ENCODE measurements at regions of chr7 and their contacts with region 1.

Region 1: DNA sequence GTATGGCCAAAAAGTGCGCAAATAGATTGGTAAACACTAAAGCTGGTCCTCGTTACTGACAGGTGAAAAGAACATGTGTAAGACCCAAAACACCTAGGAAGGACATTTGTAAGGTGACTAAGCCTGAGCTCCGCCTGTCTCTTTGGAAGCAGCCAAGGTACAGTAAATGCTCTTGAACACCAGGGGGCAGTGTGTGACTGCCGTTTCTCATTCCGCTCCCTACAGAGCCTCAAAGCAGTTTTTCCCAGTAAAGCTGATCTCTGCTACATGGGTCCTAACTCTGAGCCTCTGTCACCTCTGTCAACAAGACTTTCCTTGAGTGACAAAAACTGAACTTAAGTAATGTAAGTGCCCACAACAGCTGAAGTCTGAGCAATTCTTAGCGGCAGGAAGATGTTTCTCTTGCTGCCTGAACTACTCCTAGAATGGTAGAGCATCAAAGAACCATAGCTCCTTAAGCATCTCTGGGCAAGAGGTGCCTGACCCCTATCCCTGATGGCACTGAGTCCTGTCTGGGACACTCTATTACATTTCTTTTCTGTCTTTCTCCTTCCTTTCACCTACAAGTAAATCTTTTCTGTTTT is 238.0 kb upstream of the INHBA start:
- DNase-seq: peak; percentile 66
- H3K4me3 Mint-ChIP-seq: no peak overlapping the region
- H3K27ac Mint-ChIP-seq: no peak overlapping the region
- H3K4me1 Mint-ChIP-seq: peaks cover 5% of the 10 kb centered on the region
- H3K27me3 Mint-ChIP-seq: peaks cover 25% of the 10 kb centered on the region

Region 2: DNA sequence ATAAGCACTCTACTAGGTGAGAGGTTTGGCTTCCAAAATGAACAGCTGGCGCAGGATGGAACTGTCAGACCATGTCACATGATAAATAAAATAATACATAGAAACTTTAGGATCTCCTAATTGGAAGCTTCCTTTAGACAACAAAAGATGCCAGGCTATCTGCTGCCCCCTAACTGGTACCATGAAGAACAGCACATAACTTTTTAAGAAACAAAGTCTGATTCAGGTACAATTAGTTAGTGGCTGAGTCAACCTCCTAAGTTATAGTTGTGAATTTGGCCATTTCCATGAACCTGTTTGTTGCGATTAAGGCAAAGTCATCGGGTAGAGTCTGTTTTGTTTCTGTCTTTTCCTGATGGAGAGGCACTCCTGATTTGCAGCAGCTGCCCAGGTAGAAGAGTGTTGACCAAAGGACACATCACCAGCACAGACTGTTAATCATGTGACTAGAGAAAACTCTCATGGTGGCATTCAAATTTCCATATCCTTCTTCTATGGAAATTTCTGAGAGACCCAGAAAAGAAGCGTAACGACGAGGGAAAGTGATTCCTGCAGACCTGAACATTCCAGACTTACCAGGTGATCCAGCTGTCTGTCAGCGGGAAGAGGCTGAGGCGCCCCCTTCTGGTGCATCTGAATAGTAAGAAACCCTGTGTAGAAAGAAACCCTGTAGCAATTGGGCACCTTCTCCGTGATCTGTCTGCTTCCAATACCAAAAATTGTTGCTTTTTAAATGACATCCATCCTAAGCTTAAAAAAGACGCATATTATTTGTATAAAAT is 229.4 kb before region 1 on chr7:
- CTCF ChIA-PET with region 1: no interaction called
- POLR2A ChIA-PET with region 1: no interaction called
- intact Hi-C with region 1: no loop called
- DNase-seq: no peak
- H3K4me3 Mint-ChIP-seq: no peak overlapping the region
- H3K27ac Mint-ChIP-seq: no peak overlapping the region
- H3K4me1 Mint-ChIP-seq: no peaks in the 10 kb centered on the region
- H3K27me3 Mint-ChIP-seq: peaks cover 6% of the 10 kb centered on the region

Region 3: GRCh38 chr7:41792120-41792519 is 148.7 kb before region 1 on chr7:
- CTCF ChIA-PET with region 1: no interaction called
- POLR2A ChIA-PET with region 1: no interaction called
- intact Hi-C with region 1: no loop called
- DNase-seq: no peak
- H3K4me3 Mint-ChIP-seq: no peak overlapping the region
- H3K27ac Mint-ChIP-seq: no peak overlapping the region
- H3K4me1 Mint-ChIP-seq: no peaks in the 10 kb centered on the region
- H3K27me3 Mint-ChIP-seq: no peaks in the 10 kb centered on the region

Region 4: DNA sequence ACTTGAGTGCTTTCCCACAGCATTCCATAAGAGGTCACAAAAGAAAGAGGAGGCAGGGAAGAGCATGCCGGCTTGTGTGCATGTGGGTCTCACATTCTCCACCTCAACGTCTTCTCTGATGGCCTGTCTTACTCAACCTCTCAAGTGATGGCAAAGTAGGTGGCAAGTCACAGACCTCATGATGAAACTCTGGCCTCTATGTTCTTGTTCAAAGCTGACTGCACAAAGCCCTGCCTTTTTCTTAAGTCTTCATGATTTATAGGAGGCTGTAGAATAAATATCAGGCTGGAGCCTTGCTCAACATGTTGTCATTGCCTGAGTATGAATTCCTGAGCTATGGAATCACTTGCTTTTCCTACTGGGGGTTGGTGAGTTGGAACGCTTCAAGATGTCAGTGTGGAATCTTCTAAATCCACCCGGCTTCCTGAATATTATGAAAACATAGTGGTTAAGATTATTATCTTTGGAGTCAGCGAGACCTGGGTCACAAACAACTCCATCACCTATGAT is 24.3 kb before region 1 on chr7:
- CTCF ChIA-PET with region 1: interaction called, 10 read pairs
- POLR2A ChIA-PET with region 1: interaction called, 3 read pairs
- intact Hi-C with region 1: no loop called
- DNase-seq: no peak
- H3K4me3 Mint-ChIP-seq: no peak overlapping the region
- H3K27ac Mint-ChIP-seq: no peak overlapping the region
- H3K4me1 Mint-ChIP-seq: no peaks in the 10 kb centered on the region
- H3K27me3 Mint-ChIP-seq: peaks cover 9% of the 10 kb centered on the region

Region 5: DNA sequence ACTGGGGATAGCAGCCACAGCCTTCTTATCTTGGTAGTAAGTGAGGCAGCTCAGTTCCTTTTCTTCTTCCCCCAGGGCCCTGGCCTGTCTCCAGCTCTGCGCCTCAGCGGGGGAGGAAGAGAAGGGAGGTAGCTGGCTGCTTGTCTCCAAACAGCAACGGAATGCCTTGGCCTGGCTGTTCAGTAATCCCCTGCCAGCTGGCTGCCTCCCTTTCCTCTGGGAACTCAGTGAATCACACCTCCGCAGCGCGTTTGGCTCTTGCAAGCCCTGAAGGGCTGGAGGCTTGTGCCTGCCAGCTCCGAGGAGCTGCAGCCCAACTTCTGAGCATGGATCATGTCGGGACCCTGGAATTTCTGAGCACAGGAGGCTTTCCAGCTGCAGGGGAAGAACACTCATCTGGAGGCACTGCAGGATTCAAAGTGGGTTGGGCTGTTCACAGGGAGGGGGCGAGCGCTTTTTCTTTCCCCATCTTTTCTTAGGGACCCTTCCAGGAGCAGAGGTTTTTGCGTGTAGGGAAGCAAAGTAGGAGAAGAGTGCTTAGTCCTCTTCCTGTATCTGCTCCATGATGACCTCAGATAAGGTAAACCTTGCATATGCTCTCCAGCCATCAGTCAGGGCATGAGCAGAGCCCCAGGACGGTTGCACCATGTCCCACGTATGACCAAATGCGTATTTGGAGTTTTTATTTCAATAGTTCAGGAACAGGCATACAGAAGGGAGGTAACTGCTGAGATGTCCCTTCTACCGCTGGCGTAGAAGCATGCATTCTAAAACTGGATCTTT is 15.2 kb after region 1 on chr7:
- CTCF ChIA-PET with region 1: interaction called, 14 read pairs
- POLR2A ChIA-PET with region 1: no interaction called
- intact Hi-C with region 1: no loop called
- DNase-seq: no peak
- H3K4me3 Mint-ChIP-seq: no peak overlapping the region
- H3K27ac Mint-ChIP-seq: no peak overlapping the region
- H3K4me1 Mint-ChIP-seq: no peaks in the 10 kb centered on the region
- H3K27me3 Mint-ChIP-seq: peaks cover 30% of the 10 kb centered on the region

Region 6: DNA sequence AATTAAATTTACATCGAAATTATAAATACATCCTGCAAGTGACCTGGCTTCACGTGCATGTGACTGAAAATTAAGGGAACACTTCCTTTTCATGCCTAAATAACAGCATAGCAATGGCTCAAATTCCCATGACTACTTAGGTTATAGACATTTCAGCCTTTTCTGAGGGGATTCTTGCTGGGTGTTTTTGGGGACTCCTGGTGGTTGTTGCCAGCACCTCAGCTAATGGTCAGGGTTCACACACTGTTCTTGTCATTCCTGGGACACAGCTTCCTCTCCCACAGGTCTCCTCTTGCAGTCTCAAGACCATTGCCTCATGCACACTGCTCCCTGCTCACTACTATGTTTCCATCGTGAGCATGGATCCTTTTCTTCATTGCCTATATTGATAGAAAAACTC is 445.1 kb after region 1 on chr7:
- CTCF ChIA-PET with region 1: no interaction called
- POLR2A ChIA-PET with region 1: no interaction called
- intact Hi-C with region 1: no loop called
- DNase-seq: no peak
- H3K4me3 Mint-ChIP-seq: no peak overlapping the region
- H3K27ac Mint-ChIP-seq: no peak overlapping the region
- H3K4me1 Mint-ChIP-seq: no peaks in the 10 kb centered on the region
- H3K27me3 Mint-ChIP-seq: no peaks in the 10 kb centered on the region

Region 7: GRCh38 chr7:42876182-42877068 is 935.6 kb after region 1 on chr7:
- CTCF ChIA-PET with region 1: interaction called, 21 read pairs
- POLR2A ChIA-PET with region 1: no interaction called
- intact Hi-C with region 1: loop called (anchors 2 kb)
- DNase-seq: peak; percentile 73
- H3K4me3 Mint-ChIP-seq: no peak overlapping the region
- H3K27ac Mint-ChIP-seq: no peak overlapping the region
- H3K4me1 Mint-ChIP-seq: no peaks in the 10 kb centered on the region
- H3K27me3 Mint-ChIP-seq: peaks cover 3% of the 10 kb centered on the region